Activated CD8-positive, alpha-beta T cell treated with anti-CD3 and anti-CD28 coated beads for 36 hours (primary cell): ENCODE measurements at regions of chr5 and their contacts with region 1.

Region 1: DNA sequence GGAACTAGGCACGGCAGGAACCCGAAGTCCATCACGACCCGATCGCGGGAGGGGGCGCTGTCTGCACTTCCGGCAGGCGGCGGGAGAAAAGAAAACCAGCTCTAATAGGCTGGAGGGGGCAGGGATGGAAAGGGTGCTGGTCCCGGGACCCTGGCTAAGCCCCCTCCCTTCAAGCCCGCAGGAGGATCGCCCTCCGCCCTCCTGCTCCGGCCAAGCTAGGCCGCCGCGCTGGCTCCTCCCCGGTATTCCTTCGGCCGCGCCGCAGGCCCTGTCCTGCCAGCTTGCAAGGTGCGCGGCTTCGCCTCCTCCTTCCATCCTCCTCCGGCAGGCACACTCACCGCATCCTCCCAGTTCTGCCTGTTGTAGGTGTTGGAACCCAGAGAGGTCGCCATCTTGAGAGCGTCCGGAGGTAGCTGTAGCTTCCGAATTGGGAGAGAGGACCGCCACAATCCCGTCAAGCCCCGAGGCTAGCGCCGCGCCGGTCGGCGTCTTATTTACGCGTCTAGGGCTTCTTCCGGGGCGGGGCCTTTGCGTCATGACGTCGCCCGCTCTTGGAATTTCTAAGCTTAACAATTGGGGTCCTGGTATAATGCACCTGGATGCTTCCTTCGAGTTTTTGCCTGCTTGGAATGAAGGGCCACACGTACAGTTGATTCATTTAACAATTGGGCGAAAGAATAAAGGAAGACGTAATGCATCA is at the start of gene RBM22:
- DNase-seq: peak; percentile 96
- ATAC-seq: peak; percentile 96
- H3K4me3 Mint-ChIP-seq: no peak within 1 kb of the TSS
- H3K27ac Mint-ChIP-seq: no peak within 1 kb of the TSS
- H3K4me1 Mint-ChIP-seq: peaks cover 16% of the 10 kb centered on the region
- H3K27me3 Mint-ChIP-seq: no peaks in the 10 kb centered on the region
- CTCF ChIP-seq: peak; percentile 79
- total RNA-seq, gene RBM22: 53.1 to 59.7 TPM

Region 2: GRCh38 chr5:150689120-150689519 is 11.6 kb before region 1 on chr5:
- CTCF ChIA-PET with region 1: interaction called, 13 read pairs
- POLR2A ChIA-PET with region 1: interaction called, 11 read pairs
- intact Hi-C with region 1: no loop called
- DNase-seq: no peak
- ATAC-seq: no peak
- H3K4me3 Mint-ChIP-seq: no peak overlapping the region
- H3K27ac Mint-ChIP-seq: no peak overlapping the region
- H3K4me1 Mint-ChIP-seq: no peaks in the 10 kb centered on the region
- H3K27me3 Mint-ChIP-seq: no peaks in the 10 kb centered on the region
- CTCF ChIP-seq: no peak

Region 3: DNA sequence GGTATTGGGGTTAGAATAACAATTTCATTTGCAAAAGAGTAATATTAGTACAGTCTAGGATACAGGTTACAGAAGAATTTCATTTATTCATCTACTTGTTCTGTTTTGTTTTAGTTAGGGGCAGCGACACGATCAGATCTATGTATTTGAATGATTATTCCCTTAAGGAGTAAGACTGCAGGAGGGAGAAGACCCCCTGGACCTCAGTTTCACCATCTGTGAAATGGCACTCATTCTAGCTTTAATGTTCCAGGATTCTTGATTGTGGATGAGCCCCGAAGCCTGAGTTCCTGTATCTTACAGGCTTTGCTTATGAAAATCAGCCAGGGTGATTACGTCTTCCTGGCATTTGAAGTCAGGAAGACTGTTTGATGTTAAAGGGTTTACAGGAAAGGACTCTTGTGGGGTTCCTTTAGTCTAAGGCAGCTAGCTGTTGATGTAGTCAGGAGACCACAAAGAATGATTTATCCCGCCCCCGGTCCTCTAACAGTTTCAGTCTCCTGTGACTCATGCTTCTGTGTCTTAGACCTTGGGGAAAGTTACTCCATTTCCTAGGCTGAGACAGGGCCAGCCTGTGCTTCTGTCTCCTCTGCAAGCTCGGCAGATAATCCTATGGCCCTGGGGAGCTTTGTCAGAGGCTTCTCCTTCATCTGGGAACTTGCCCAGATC is 89.3 kb after region 1 on chr5:
- CTCF ChIA-PET with region 1: interaction called, 11 read pairs
- POLR2A ChIA-PET with region 1: interaction called, 5 read pairs
- intact Hi-C with region 1: no loop called
- DNase-seq: peak; percentile 92
- ATAC-seq: peak; percentile 98
- H3K4me3 Mint-ChIP-seq: peak overlapping the region; percentile 71
- H3K27ac Mint-ChIP-seq: peak overlapping the region; percentile 92
- H3K4me1 Mint-ChIP-seq: peaks cover 57% of the 10 kb centered on the region
- H3K27me3 Mint-ChIP-seq: no peaks in the 10 kb centered on the region
- CTCF ChIP-seq: no peak